Posterior vena cava (tissue), 2 donors: ENCODE measurements at regions of chr10 and their contacts with region 1.

Region 1: DNA sequence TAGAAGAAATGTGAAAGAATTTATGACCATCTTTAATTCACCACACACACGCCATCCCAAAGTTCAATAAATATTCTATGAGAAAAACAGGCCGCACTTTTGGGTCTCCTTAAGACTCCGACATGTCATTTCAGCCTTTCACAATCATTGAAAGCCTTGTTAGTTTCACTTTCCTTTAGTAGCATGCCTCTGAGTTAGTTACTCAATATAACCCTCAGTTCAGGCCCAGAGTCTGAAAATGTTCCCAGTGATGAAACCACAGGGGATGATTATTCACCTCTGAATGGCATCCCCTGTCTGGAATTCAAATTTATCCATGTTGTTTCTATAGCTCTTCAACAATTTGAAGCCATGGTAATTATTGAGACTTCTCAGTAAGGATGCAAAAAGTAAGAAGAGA is 278.1 kb upstream of the NRP1 start:
- DNase-seq: no peak

Region 2: GRCh38 chr10:33594475-33594874 is 18.1 kb before region 1 on chr10:
- intact Hi-C with region 1: loop called in 1 of 2 experiments (anchors 1 kb)
- DNase-seq: no peak

Region 3: DNA sequence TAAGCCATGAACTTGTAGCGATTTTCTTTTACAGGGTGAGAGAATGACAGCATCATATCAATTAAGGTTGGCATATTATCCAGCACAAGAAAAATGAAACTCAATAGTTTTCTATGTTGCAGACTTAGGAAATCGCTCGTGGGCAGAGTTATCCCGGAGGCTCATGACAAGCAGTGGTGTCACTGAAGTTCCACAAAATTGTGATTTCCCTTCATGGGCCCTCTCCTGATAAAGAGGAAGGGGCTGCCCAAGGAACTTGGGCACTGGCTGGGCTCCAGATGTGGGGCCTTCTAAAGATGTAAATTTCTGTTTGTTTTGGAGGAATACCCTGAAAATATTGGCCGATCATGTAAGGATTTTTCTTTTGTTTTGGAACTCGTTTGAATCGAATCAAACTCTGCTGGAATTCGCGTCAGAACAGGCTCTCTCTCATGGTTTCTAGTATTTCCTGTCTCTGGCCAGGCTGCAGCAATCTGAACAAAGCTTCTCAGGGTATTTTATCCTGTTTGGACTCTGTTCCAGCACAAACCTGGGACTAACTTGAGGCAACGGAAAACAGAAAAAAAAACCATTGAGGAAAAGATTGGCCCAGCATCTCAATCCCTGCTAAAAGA is 62.5 kb after region 1 on chr10:
- intact Hi-C with region 1: no loop called
- DNase-seq: no peak

Region 4: DNA sequence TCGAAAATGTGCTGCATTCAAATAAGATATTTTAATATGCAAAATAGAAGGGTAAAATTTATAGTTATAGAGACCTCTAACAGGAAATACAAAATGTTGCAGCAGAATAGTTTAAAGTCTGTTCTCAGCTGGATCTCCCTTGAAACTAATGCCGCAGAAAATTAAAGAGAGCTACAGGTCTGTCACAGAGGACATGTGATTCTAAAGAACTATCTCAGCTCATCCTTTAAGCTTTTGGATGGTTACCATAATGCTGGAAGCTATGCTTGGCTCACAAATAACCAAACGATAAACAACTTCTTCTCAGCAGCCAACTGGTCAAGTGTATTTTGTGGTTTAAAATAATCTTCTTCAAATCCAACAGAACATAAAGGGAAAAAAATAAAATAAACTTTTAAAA is 849.5 kb after region 1 on chr10:
- intact Hi-C with region 1: loop called in 1 of 2 experiments (anchors 5 kb)
- DNase-seq: no peak

Region 5: GRCh38 chr10:35140727-35141126 is 1528.2 kb after region 1 on chr10:
- intact Hi-C with region 1: no loop called
- DNase-seq: no peak